Heart left ventricle (tissue), 16 donors: ENCODE measurements at regions of chr9 and their contacts with region 1.

Region 1: DNA sequence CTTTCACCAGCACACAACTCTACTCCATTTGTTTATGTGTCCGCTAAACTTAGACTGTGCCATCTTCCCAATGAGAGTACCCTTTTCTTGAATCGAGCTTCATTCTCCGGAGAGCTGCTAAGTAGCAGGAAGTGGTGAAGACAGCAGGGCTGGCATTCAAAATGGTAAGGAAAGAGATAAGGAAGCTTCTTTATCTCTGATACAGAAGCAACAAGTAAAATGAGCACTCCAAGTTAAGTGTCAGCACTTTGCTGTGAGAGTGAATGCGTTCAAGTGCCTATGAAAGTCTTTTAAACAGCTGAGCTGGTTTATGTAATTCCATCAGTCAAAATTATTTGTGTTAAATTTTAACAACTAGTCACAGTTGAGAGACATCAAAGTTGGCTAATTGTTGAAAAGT is 386.8 kb upstream of the PTPRD start:
- DNase-seq: no peak
- ATAC-seq: no peak
- H3K4me3 ChIP-seq: no peak overlapping the region
- H3K27ac ChIP-seq: no peak overlapping the region
- H3K4me1 ChIP-seq: no peaks in the 10 kb centered on the region
- H3K27me3 ChIP-seq: no peaks in the 10 kb centered on the region
- CTCF ChIP-seq: no peak
- POLR2A ChIP-seq: no peak

Region 2: GRCh38 chr9:10678790-10679189 is 320.9 kb before region 1 on chr9:
- intact Hi-C with region 1: no loop called
- DNase-seq: no peak
- ATAC-seq: no peak
- H3K4me3 ChIP-seq: no peak overlapping the region
- H3K27ac ChIP-seq: no peak overlapping the region
- H3K4me1 ChIP-seq: no peaks in the 10 kb centered on the region
- H3K27me3 ChIP-seq: no peaks in the 10 kb centered on the region
- CTCF ChIP-seq: no peak
- POLR2A ChIP-seq: no peak

Region 3: GRCh38 chr9:10921671-10922070 is 78.0 kb before region 1 on chr9:
- intact Hi-C with region 1: no loop called
- DNase-seq: no peak
- ATAC-seq: no peak
- H3K4me3 ChIP-seq: no peak overlapping the region
- H3K27ac ChIP-seq: no peak overlapping the region
- H3K4me1 ChIP-seq: no peaks in the 10 kb centered on the region
- H3K27me3 ChIP-seq: no peaks in the 10 kb centered on the region
- CTCF ChIP-seq: no peak
- POLR2A ChIP-seq: no peak

Region 4: GRCh38 chr9:11045589-11045988 is 45.9 kb after region 1 on chr9:
- intact Hi-C with region 1: loop called in 1 of 10 experiments (anchors 10 kb)
- DNase-seq: no peak
- ATAC-seq: no peak
- H3K4me3 ChIP-seq: no peak overlapping the region
- H3K27ac ChIP-seq: no peak overlapping the region
- H3K4me1 ChIP-seq: no peaks in the 10 kb centered on the region
- H3K27me3 ChIP-seq: no peaks in the 10 kb centered on the region
- CTCF ChIP-seq: no peak
- POLR2A ChIP-seq: no peak